Cardiac septum (tissue), 1 donor: ENCODE measurements at regions of chr2 and their contacts with region 1.

Region 1: DNA sequence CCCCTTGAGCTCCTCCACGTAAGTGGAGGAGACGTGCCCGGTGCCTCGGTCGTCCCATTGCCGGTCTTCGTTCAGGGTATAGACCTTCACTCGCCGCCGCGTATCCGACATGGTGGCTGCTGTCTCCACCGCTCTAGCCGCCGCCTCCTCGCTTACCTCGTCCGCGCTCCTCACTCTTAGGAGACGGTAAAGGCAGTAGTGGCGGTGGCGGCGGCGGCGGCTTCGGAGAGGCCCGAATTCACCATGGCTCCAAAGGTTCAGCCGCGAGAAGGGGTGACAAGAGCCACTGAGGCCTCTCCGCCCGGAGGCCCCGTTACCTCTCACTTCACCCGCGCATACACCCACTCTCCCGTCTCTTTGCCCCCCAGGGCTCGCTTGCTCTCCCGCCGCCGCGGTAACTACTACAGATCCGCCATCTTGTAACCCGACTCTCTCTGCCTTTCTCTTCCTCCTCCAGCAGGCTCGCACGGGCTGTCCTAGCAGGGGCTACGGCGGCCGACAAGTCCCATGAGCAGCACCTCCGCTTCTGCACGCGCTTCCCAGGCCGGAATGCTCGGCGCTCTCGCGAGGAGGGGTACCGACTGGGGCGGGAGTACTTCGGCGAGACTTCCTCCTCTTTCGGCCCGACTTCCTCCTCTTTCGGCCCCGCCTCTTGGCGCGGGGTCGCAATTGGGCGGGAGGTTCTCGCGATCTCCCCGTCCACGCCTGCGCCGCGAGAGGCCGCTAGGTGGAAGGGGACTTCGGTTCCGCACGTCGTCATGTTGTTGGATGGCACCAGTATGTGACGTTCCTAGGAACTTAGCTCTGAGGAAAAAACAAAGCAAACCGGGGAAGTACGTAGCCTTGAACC is at the start of gene PPP4R3B:
- DNase-seq: peak; percentile 99
- total RNA-seq, gene PPP4R3B: 29.6 TPM

Region 2: DNA sequence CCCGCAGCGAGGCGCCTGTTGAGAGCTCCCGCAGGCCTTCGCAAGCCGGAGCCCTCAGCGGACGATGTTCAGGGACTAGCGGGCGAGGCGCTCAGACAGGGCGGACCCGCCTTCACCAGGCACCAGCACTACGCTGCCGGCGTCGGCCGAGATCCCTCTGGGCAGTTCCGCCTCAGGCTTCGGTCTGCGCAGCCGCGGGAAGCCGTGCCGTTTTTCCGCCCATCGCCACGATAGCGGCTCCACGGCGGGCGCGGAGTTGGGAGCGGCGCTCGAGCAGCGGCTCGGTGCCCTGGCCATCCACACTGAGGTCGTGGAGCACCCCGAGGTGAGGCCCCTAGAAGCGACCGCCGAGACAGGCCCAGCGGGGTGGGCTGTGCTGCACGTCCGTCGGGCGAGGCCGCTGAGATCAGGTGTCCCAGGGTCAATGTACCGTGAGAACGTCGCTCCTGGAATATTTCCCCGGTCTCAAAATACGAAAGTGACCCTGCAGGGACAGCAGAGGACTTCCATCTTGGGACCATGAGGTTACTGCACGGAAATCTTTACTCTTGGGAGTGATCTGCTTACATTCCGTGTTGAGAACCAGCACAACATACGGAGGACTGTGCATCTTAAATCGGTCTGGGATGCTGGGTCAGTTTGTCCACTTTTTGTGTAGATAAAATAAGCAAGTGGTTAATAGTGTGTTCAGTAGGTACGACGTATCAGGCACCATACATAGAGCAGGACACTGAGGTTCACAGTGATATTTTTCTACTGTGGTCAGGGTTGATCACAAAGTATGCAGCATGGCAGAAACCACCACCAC is 335.1 kb before region 1 on chr2:
- intact Hi-C with region 1: loop called (anchors 10 kb)
- DNase-seq: peak; percentile 97

Region 3: GRCh38 chr2:55519938-55520885 is 97.2 kb before region 1 on chr2:
- intact Hi-C with region 1: loop called (anchors 5 kb)
- DNase-seq: no peak

Region 4: GRCh38 chr2:55581435-55581834 is 36.0 kb before region 1 on chr2:
- intact Hi-C with region 1: no loop called
- DNase-seq: no peak

Region 5: DNA sequence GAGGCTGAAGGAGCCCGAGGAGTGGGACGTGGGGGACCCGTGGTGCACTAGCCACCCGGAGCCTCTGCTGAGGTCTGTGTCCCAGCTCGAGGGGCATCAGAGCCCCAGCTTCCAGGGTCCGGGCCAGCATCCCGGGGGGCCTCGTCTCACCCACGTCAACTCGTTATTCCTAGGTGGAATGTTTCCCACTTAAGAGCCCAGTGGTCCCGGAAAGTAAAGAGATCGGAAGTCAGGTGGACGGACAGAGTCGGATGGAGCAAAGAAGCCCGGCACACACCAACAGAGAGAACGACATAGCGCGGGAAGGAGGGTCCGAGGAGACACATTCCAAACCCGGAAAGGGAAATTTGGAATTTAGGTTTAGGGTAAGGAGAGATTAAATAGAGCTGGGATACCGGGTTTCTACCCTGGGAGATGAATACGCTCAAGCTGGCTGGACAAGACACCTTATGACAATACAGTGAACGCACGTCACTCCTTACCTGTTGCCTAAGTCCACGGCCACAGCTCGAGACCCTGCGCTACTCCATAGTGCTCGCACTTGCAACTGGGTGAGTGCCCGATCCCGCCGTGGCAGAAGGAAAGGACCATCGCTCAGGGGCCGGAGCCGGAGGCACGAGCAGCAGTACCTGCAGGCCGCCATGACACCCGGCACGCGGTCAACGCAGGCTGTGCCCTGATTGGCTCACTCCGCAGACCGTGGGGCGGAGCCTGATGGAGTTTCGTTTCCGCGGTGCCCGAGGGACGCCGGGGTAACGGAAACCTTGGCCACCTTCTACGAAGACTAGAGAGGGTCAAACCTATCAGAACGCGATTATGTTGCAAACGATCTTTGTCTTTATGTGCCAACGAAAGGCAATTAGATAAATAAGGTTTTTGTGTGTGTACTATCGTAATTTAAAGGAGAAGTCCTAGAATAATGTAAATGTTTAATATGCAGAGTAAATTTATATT is 76.1 kb after region 1 on chr2 and contains the start of gene PNPT1:
- intact Hi-C with region 1: loop called (anchors 5 kb)
- DNase-seq: peak; percentile 98
- total RNA-seq, gene PNPT1: 21.9 TPM

Region 6: GRCh38 chr2:55779459-55780421 is 162.3 kb after region 1 on chr2:
- intact Hi-C with region 1: no loop called
- DNase-seq: no peak